ENCODE measurements at regions of chr14 and their contacts with region 1.

Region 1: DNA sequence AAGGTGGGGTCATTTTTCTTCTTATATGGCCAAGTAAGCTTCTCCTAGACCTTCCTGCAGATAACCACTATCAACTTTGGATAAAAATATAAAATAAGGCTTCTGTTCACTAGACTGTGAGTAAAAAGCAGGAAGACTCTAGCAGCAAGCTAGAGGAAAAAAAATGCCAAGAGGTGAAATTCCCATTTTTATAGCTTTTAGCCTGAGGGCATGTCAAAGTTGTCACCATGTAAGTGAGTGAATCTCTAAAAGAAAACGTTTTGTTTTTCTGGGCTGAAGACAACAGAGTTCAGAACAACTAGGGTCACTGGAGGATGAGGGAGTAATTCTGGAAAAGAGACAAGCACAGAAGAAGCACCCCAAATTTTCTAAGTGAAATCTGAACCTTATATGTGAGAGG is 143.9 kb upstream of the DIO3 start:
- DNase-seq: no peak
- ATAC-seq: no peak
- H3K4me3 ChIP-seq: no peak overlapping the region
- H3K27ac ChIP-seq: no peak overlapping the region
- H3K4me1 ChIP-seq: no peaks in the 10 kb centered on the region
- H3K27me3 ChIP-seq: no peaks in the 10 kb centered on the region
- CTCF ChIP-seq: no peak

Region 2: GRCh38 chr14:101217616-101218371 is 199.6 kb before region 1 on chr14:
- CTCF ChIA-PET with region 1: interaction called, 11 read pairs
- POLR2A ChIA-PET with region 1: no interaction called
- in situ Hi-C with region 1: no loop called
- intact Hi-C with region 1: no loop called
- DNase-seq: no peak
- ATAC-seq: no peak
- H3K4me3 ChIP-seq: no peak overlapping the region
- H3K27ac ChIP-seq: no peak overlapping the region
- H3K4me1 ChIP-seq: no peaks in the 10 kb centered on the region
- H3K27me3 ChIP-seq: no peaks in the 10 kb centered on the region
- CTCF ChIP-seq: no peak

Region 3: GRCh38 chr14:101444116-101444515 is 26.7 kb after region 1 on chr14:
- CTCF ChIA-PET with region 1: interaction called, 3 read pairs
- POLR2A ChIA-PET with region 1: interaction called, 10 read pairs
- in situ Hi-C with region 1: no loop called
- intact Hi-C with region 1: no loop called
- DNase-seq: no peak
- ATAC-seq: no peak
- H3K4me3 ChIP-seq: no peak overlapping the region
- H3K27ac ChIP-seq: no peak overlapping the region
- H3K4me1 ChIP-seq: no peaks in the 10 kb centered on the region
- H3K27me3 ChIP-seq: no peaks in the 10 kb centered on the region
- CTCF ChIP-seq: no peak

Measured in Panc1 (cell line).